ENCODE measurements at regions of chr3 and their contacts with region 1.

Region 1: DNA sequence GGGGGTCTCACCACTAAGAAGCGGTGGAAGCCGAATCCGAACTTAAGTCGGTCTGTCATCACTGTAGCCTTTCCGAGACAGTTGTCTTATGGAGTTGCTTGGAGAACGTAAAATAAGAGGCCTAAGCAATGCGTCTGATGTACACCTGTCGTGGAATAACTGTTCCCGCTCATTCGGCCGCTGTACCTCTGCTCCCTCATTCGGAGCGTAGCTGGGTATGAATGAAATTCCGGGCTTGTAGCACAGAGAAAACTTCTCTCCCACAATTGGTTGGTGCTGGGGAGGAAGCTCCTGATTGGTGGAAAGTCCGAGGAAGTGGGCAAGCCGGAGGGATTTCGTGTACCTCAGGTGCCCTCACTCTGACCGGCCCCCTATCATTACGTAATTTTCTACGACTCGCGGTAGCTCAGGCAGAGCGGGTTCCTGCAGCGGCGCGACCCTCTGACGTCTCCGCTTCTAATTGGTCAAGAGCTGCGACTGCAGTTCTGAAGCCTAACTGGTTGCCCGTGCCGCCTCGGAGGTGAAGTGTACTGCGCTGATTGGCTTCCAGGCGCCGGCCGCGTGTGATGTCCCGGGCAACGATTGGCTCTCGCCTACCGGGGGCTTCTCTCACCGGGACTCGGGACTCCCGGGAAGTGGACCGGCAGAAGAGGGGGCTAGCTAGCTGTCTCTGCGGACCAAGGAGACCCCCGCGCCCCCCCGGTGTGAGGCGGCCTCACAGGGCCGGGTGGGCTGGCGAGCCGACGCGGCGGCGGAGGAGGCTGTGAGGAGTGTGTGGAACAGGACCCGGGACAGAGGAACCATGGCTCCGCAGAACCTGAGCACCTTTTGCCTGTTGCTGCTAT is at the start of gene DNAJB11:
- DNase-seq: peak; percentile 97 to 99
- ATAC-seq: peak; percentile 83 to 95 (median 83)
- H3K4me3 ChIP-seq: peak within 1 kb of the TSS; percentile 84
- H3K4me3 Mint-ChIP-seq: peak within 1 kb of the TSS; percentile 99
- H3K27ac ChIP-seq: peak within 1 kb of the TSS; percentile 95
- H3K27ac Mint-ChIP-seq: peak within 1 kb of the TSS; percentile 97 to 98
- H3K4me1 ChIP-seq: peaks cover 36% of the 10 kb centered on the region
- H3K4me1 Mint-ChIP-seq: peaks cover 50 to 58% of the 10 kb centered on the region in 2 donors
- H3K27me3 ChIP-seq: no peaks in the 10 kb centered on the region
- H3K27me3 Mint-ChIP-seq: no peaks in the 10 kb centered on the region
- CTCF ChIP-seq: no peak
- total RNA-seq, gene DNAJB11: 85.9 to 112 (median 111) TPM

Region 2: GRCh38 chr3:185508335-185508991 is 1061.9 kb before region 1 on chr3:
- intact Hi-C with region 1: no loop called
- DNase-seq: no peak
- ATAC-seq: no peak
- H3K4me3 ChIP-seq: no peak overlapping the region
- H3K4me3 Mint-ChIP-seq: no peak overlapping the region
- H3K27ac ChIP-seq: no peak overlapping the region
- H3K27ac Mint-ChIP-seq: no peak overlapping the region
- H3K4me1 ChIP-seq: no peaks in the 10 kb centered on the region
- H3K4me1 Mint-ChIP-seq: no peaks in the 10 kb centered on the region
- H3K27me3 ChIP-seq: no peaks in the 10 kb centered on the region
- H3K27me3 Mint-ChIP-seq: peaks cover 11 to 19% of the 10 kb centered on the region in 2 donors
- CTCF ChIP-seq: no peak

Region 3: GRCh38 chr3:185585859-185586685 is 984.2 kb before region 1 on chr3 and contains the start of gene SENP2:
- intact Hi-C with region 1: loop called (anchors 1 kb)
- DNase-seq: peak; percentile 100
- ATAC-seq: peak; percentile 80 to 93 (median 85)
- H3K4me3 ChIP-seq: peak within 1 kb of the TSS; percentile 98
- H3K4me3 Mint-ChIP-seq: peak within 1 kb of the TSS; percentile 92
- H3K27ac ChIP-seq: peak within 1 kb of the TSS; percentile 99
- H3K27ac Mint-ChIP-seq: peak within 1 kb of the TSS; percentile 93 to 98
- H3K4me1 ChIP-seq: peaks cover 40% of the 10 kb centered on the region
- H3K4me1 Mint-ChIP-seq: peaks cover 47 to 50% of the 10 kb centered on the region in 2 donors
- H3K27me3 ChIP-seq: no peaks in the 10 kb centered on the region
- H3K27me3 Mint-ChIP-seq: no peaks in the 10 kb centered on the region
- CTCF ChIP-seq: no peak
- total RNA-seq, gene SENP2: 57.8 to 59.8 (median 58.7) TPM

Region 4: GRCh38 chr3:185937689-185938463 is 632.4 kb before region 1 on chr3 and contains the start of gene TRA2B:
- intact Hi-C with region 1: loop called (anchors 1 kb)
- DNase-seq: peak; percentile 97 to 99
- ATAC-seq: peak; percentile 87 to 96 (median 88)
- H3K4me3 ChIP-seq: peak within 1 kb of the TSS; percentile 100
- H3K4me3 Mint-ChIP-seq: peak within 1 kb of the TSS; percentile 100
- H3K27ac ChIP-seq: peak within 1 kb of the TSS; percentile 100
- H3K27ac Mint-ChIP-seq: peak within 1 kb of the TSS; percentile 100
- H3K4me1 ChIP-seq: peaks cover 5% of the 10 kb centered on the region
- H3K4me1 Mint-ChIP-seq: peaks cover 53% of the 10 kb centered on the region in 2 donors
- H3K27me3 ChIP-seq: no peaks in the 10 kb centered on the region
- H3K27me3 Mint-ChIP-seq: no peaks in the 10 kb centered on the region
- CTCF ChIP-seq: peak; percentile 37
- total RNA-seq, gene TRA2B: 565 to 669 (median 596) TPM

Region 5: GRCh38 chr3:186529201-186529999 is 40.9 kb before region 1 on chr3:
- intact Hi-C with region 1: no loop called
- DNase-seq: no peak
- ATAC-seq: no peak
- H3K4me3 ChIP-seq: no peak overlapping the region
- H3K4me3 Mint-ChIP-seq: no peak overlapping the region
- H3K27ac ChIP-seq: no peak overlapping the region
- H3K27ac Mint-ChIP-seq: no peak overlapping the region
- H3K4me1 ChIP-seq: peaks cover 23% of the 10 kb centered on the region
- H3K4me1 Mint-ChIP-seq: peaks cover 6 to 9% of the 10 kb centered on the region in 2 donors
- H3K27me3 ChIP-seq: no peaks in the 10 kb centered on the region
- H3K27me3 Mint-ChIP-seq: peaks cover 0 to 2% of the 10 kb centered on the region in 2 donors
- CTCF ChIP-seq: no peak

Region 6: DNA sequence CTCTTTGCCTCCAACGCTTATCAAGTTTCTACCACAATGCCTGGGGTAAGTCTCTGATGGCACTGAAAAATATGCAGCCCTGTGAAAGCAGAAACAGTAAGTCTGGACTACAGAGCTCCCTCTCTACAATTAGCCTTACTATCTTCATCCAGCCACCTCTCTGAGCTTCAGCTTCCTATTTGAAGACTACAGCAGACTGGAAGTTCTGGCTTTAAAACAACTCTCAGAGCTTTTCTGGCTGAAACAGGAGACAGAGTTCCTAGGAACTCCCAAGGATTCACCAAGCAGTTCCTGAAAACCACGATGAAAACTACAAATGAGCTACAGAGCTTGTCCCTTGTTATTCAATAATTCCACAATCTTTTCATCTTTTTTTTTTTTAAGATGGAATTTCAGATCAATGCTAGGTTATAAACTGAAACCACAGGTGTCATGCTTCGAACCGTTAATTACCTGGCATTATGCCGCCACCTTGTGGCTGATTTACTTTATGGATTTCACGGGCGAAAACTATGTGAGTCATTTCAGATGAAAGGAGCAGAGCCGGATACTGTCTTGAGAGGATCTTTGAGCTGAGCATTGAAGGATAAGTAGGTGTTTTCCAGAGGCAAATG is 30.0 kb before region 1 on chr3:
- intact Hi-C with region 1: no loop called
- DNase-seq: peak; percentile 62 to 93
- ATAC-seq: peak; percentile 84 to 94 (median 94)
- H3K4me3 ChIP-seq: no peak overlapping the region
- H3K4me3 Mint-ChIP-seq: peak overlapping the region; percentile 26
- H3K27ac ChIP-seq: no peak overlapping the region
- H3K27ac Mint-ChIP-seq: peak overlapping the region in 1 of 2 donors; percentile 75
- H3K4me1 ChIP-seq: no peaks in the 10 kb centered on the region
- H3K4me1 Mint-ChIP-seq: peaks cover 8% of the 10 kb centered on the region in 2 donors
- H3K27me3 ChIP-seq: no peaks in the 10 kb centered on the region
- H3K27me3 Mint-ChIP-seq: no peaks in the 10 kb centered on the region
- CTCF ChIP-seq: peak; percentile 75

Region 7: GRCh38 chr3:186783073-186783730 is 212.9 kb after region 1 on chr3 and contains the start of gene EIF4A2:
- intact Hi-C with region 1: loop called (anchors 1 kb)
- DNase-seq: peak; percentile 89 to 96
- ATAC-seq: peak; percentile 71 to 85 (median 77)
- H3K4me3 ChIP-seq: peak within 1 kb of the TSS; percentile 79
- H3K4me3 Mint-ChIP-seq: peak within 1 kb of the TSS; percentile 96
- H3K27ac ChIP-seq: peak within 1 kb of the TSS; percentile 93
- H3K27ac Mint-ChIP-seq: peak within 1 kb of the TSS; percentile 95 to 97
- H3K4me1 ChIP-seq: peaks cover 19% of the 10 kb centered on the region
- H3K4me1 Mint-ChIP-seq: peaks cover 57% of the 10 kb centered on the region in 2 donors
- H3K27me3 ChIP-seq: no peaks in the 10 kb centered on the region
- H3K27me3 Mint-ChIP-seq: no peaks in the 10 kb centered on the region
- CTCF ChIP-seq: no peak
- total RNA-seq, gene EIF4A2: 551 to 652 (median 621) TPM

Region 8: GRCh38 chr3:187139126-187139894 is 569.0 kb after region 1 on chr3 and contains the start of gene RPL39L:
- intact Hi-C with region 1: loop called (anchors 10 kb)
- DNase-seq: peak; percentile 96 to 97
- ATAC-seq: peak; percentile 94 to 98 (median 95)
- H3K4me3 ChIP-seq: peak within 1 kb of the TSS; percentile 62
- H3K4me3 Mint-ChIP-seq: peak within 1 kb of the TSS; percentile 89
- H3K27ac ChIP-seq: peak within 1 kb of the TSS; percentile 90
- H3K27ac Mint-ChIP-seq: peak within 1 kb of the TSS; percentile 94 to 98
- H3K4me1 ChIP-seq: peaks cover 17% of the 10 kb centered on the region
- H3K4me1 Mint-ChIP-seq: peaks cover 20 to 33% of the 10 kb centered on the region in 2 donors
- H3K27me3 ChIP-seq: no peaks in the 10 kb centered on the region
- H3K27me3 Mint-ChIP-seq: no peaks in the 10 kb centered on the region
- CTCF ChIP-seq: peak; percentile 88
- total RNA-seq, gene RPL39L: 3.1 to 6.6 (median 4.3) TPM

Measured in natural killer cell (primary cell).